Posterior cingulate gyrus (tissue), 11 donors: ENCODE measurements at regions of chr18 and their contacts with region 1.

Region 1: DNA sequence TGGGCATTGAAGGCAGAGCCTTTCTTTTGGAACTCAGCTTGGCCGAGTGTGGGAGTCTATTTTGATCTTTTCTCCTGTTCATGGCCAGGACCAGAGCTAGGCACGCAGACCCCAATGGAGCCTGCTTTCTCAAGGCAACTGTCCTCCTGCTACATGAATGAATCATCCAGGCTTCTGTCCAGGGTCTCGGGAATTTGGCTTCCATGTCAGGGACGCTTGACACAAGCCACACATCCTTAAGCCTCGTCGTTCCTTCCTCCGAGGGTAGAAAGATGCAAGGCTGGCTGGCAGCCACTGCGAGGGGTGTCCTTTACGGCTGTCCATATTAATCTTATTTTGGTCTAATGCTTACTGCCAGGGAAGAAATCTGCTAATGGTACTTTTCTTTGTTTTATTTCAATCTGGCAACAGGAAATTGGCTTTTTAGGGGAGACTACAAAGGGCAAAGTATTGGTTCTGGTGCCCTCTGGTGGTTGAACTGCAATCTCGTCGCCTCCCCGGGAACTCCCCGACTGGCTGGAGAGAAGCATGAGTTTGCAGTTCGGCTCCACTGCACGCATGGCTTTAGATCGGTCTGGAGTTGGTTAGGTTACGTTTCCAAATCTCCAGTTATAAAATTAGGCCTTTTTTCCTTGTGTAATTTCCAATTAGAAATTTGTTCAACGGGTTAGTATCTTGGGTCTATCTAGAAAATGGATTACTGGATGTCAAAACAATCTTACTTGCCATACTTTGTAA is 135.2 kb downstream of the ALPK2 start:
- DNase-seq: peak; percentile 65 to 96 (median 80)

Region 2: DNA sequence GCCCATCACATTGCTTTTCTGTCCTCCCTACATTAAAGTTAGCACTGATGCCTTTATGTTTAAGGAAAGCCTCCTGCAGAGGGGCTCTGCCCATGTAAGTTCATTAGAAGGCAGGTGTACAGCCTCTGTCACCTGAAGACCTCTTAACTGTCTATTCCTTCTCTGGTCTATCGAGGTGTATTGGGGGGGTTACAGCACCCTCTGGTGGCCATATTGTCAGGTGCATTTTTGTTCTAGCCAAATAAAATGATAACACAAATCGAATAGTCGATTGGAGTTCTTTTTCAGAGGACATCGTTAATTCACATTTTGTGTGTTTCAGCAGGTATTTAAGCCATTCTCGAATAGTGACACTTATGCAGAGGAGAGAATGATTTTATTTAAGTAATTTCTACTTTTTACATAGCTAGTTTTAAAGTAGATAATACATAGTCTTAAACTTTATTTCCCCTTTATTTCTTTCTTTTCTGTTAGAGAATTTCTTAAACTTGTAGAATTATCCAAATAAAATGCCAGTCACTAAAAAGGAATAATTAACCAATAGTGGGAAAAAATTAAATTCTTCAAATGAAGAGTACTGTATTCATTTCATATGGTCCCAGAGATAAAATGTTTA is 312.8 kb before region 1 on chr18:
- intact Hi-C with region 1: loop called (anchors 10 kb)
- DNase-seq: peak in 5 of 10 donors; percentile 47 to 84 (median 61)

Region 3: DNA sequence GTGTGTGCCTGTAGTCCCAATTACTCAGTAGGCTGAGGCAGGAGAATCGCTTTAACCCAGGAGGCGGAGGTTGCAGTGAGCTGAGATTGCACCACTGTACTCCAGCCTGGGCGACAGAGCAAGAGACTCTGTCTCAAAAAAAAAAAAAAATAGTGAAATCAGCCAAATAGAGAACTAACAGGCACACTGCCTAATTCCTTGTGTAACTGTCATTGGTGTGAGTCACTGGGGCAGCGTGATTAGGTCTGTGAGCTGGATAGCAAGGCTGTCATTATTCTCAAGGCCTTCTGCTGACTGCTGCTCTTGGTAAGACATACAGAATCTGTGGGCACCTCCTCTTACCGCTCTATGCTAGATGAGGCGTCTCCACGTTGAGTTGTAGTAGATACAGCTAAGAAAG is 179.4 kb before region 1 on chr18:
- intact Hi-C with region 1: loop called (anchors 10 kb)
- DNase-seq: peak in 2 of 10 donors; percentile 50 to 78

Region 4: GRCh38 chr18:58402247-58402646 is 91.4 kb before region 1 on chr18:
- intact Hi-C with region 1: loop called (anchors 10 kb)
- DNase-seq: no peak

Region 5: GRCh38 chr18:58699551-58699950 is 205.9 kb after region 1 on chr18:
- intact Hi-C with region 1: no loop called
- DNase-seq: no peak

Region 6: DNA sequence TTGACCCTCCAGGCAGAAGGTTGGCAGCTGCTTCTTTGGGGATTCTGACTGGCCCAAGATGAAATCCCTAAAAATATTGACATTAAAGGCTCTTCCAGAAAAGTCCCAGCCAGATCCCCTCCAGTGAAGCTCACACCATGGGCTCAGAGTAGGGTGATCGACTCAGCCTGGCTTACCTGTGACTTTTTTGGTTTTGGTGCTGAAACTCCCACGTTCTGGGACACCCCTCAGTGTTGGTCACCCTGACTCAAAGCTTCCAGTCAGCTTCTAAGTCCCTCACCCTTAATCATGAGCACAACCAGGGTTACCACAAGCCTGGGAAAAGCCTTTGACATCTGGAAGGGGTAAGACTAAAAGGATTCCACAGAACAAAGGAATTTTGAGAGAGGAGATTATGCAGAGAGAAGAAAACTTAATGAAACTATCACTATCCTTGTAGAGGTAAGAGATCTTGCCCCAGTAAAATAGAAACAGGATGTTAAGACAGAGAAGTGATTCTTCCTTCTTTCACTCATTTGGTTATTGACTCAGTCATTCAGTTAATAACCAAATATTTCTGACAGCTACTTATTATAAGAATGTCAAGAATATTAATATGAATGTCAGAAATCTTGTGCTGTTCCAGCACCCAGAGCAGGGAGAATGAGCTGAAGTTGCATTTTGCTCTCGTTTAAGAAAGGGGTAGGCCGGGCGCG is 579.2 kb after region 1 on chr18:
- intact Hi-C with region 1: no loop called
- DNase-seq: no peak